Body of pancreas (tissue), 4 donors: ENCODE measurements at regions of chr2 and their contacts with region 1.

Region 1: DNA sequence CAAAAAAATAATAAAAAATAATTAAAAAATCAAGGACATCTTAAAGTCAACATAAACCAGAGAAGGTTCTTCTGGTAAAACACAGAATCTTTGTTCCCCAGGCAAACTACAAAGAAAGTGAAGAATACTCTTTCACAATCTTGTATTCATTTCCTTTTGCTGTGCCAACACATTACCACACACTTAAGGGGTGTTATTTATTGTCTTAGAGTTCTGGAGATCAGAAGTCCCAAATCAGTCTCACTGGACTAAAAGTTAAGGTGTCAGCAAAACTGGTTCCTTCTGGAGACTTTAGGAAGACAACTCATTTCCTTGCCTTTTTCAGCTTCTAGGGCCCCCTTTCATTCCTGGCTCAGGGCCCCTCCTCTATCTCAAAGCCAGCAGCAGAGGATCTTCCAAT is 12.2 kb upstream of the CAB39 start:
- DNase-seq: no peak
- ATAC-seq: no peak
- H3K4me3 ChIP-seq: no peak overlapping the region
- H3K27ac ChIP-seq: no peak overlapping the region
- H3K4me1 ChIP-seq: no peaks in the 10 kb centered on the region
- H3K27me3 ChIP-seq: no peaks in the 10 kb centered on the region
- CTCF ChIP-seq: no peak
- POLR2A ChIP-seq: no peak

Region 2: DNA sequence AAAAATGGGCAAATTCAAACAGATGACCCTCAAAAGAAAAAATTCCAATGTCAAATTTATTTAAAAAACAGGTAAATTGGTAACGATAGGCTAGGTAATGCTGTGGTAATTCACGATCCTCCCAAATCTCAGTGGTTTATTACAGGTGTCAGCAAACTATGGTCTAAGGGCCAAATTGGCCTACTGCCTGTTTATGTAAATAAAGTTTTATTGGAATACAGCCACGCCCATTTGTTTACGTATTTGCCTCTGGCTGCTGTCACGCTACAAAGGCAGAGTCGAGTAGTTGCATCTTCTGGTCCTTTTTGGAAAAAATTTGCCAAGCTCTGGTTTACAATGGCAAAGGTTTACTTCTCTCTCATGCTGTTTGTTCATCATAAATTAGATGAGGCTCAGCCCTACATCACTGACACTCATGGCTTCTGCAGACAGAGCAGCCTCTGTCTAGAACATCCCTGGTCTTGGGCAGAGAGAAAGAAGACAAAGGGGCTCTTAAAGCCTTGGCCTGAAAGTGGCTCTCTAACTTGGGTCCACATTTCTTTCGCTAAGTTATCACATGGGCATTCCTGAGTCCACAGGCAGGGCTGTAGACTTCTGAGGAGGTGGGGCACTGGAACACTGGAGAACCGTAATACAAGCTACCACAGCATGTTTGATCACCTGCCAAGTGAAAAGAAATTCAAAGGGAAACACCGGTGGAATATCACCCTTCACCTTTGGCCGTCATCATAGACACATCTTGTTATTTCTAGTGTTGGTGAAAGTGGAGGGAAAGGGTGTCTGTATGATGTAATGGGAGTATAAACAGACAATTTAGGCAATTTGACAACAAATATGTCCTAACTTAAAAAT is 515.5 kb before region 1 on chr2:
- intact Hi-C with region 1: no loop called
- DNase-seq: no peak
- ATAC-seq: no peak
- H3K4me3 ChIP-seq: no peak overlapping the region
- H3K27ac ChIP-seq: no peak overlapping the region
- H3K4me1 ChIP-seq: no peaks in the 10 kb centered on the region
- H3K27me3 ChIP-seq: no peaks in the 10 kb centered on the region
- CTCF ChIP-seq: no peak
- POLR2A ChIP-seq: no peak

Region 3: GRCh38 chr2:230636684-230637271 is 63.7 kb before region 1 on chr2:
- intact Hi-C with region 1: no loop called
- DNase-seq: no peak
- ATAC-seq: no peak
- H3K4me3 ChIP-seq: no peak overlapping the region
- H3K27ac ChIP-seq: no peak overlapping the region
- H3K4me1 ChIP-seq: no peaks in the 10 kb centered on the region
- H3K27me3 ChIP-seq: no peaks in the 10 kb centered on the region
- CTCF ChIP-seq: no peak
- POLR2A ChIP-seq: no peak

Region 4: DNA sequence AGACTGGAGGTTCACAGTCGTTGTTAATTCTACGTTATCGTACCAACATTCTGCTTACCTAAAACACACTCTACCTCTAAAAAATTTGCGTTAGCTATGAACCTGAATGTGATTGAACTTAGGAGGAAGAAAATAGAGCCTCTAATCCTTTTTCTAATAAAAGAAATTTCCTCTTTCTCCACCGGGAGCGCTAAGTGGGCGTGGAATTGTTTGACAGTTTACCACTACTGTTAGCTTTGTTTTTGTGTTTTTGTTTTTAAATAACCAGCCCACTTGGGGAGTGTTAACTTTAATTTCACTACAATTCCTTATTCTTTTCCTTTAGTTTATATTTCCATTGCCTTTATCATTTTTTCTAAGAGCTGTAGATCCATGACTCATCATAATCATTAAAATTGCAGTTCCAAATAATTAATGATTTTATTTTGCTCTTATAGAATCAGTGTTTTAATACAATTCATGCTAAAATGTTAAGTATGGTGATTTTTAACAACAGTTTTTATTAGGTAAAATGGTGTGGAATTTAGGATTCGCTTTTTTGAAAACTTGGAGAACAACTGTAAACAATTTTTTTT is 109.3 kb after region 1 on chr2:
- intact Hi-C with region 1: loop called (anchors 10 kb)
- DNase-seq: no peak
- ATAC-seq: no peak
- H3K4me3 ChIP-seq: no peak overlapping the region
- H3K27ac ChIP-seq: no peak overlapping the region
- H3K4me1 ChIP-seq: no peaks in the 10 kb centered on the region
- H3K27me3 ChIP-seq: no peaks in the 10 kb centered on the region
- CTCF ChIP-seq: no peak
- POLR2A ChIP-seq: no peak